Right ventricle myocardium superior (tissue), 1 donor: ENCODE measurements at regions of chr6 and their contacts with region 1.

Region 1: DNA sequence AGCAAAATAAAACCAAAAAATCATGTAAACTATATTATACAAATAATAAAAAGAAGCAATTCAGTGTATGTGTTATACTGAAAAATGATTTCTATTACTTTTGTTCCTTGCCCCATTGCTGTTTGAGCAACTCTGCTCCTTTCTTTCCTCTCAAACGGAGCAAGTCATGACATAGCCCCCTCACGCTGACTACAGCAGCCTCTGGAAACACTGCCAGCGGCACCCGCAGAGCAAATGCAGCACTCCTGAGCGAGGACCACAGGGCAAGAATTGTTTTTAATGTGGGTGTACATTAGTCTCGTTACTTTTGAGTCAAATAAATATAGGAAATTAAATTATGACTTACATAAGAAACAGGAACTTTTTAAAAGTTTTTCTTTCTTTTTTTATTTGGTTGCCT is 350.1 kb upstream of the HSF2 start:
- DNase-seq: no peak
- ATAC-seq: peak; percentile 73

Region 2: GRCh38 chr6:122184401-122184827 is 135.1 kb after region 1 on chr6:
- intact Hi-C with region 1: loop called (anchors 10 kb)
- DNase-seq: no peak
- ATAC-seq: peak; percentile 84

Region 3: GRCh38 chr6:122520179-122520578 is 470.8 kb after region 1 on chr6:
- intact Hi-C with region 1: no loop called
- DNase-seq: no peak
- ATAC-seq: no peak